Endothelial cell of umbilical vein (primary cell): ENCODE measurements at regions of chr20 and their contacts with region 1.

Region 1: DNA sequence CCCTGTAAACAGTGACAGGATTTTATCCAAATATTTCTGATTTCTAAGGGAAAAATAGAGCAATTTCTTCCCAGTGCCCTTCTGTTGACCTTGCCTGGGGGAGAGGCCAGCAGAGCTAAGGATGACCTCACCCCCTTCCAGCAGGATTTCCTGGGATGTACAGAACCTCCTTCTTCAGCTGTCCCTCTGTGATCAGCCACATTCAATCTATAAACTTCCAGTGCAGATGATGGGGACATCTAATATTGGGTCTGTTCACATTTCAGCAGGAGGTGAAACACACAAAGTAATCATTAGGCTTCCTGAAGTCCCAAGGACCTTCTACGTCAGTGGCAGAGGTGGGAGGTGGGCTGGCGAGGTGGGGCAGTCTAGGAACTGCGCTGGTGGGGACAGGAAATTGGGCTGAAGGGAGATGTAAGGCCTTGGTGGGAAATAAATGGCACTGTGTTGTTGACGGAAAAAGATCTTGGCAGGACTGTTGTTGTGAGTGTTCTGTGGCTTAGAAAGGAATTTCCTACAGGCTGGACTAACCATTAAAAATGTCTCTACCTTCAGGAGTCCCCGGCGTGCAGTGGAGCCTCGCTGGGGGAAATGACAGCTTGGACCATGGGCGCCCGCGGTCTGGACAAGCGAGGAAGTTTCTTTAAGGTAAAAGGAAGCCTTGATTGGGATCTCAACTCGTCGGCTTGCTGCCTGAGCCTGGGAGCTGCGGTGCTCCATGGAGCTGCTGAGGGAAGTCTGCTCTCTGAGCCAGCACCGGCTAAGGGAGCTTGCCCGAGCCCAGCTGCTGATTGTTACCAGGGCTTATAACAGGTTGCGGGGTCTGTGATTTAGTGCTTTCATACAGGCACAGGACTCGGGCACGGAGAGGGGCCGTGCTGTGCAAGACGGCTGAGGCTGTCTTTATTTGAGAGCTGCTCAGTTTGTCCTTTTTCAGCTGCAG is 127.9 kb upstream of the NAA20 start:
- DNase-seq: peak; percentile 97
- H3K4me3 ChIP-seq: peak overlapping the region; percentile 63 to 98 (median 85)
- H3K27ac ChIP-seq: peak overlapping the region; percentile 91
- H3K4me1 ChIP-seq: peaks cover 50% of the 10 kb centered on the region
- H3K27me3 ChIP-seq: no peaks in the 10 kb centered on the region
- CTCF ChIP-seq: no peak
- POLR2A ChIP-seq: peak; percentile 69

Region 2: DNA sequence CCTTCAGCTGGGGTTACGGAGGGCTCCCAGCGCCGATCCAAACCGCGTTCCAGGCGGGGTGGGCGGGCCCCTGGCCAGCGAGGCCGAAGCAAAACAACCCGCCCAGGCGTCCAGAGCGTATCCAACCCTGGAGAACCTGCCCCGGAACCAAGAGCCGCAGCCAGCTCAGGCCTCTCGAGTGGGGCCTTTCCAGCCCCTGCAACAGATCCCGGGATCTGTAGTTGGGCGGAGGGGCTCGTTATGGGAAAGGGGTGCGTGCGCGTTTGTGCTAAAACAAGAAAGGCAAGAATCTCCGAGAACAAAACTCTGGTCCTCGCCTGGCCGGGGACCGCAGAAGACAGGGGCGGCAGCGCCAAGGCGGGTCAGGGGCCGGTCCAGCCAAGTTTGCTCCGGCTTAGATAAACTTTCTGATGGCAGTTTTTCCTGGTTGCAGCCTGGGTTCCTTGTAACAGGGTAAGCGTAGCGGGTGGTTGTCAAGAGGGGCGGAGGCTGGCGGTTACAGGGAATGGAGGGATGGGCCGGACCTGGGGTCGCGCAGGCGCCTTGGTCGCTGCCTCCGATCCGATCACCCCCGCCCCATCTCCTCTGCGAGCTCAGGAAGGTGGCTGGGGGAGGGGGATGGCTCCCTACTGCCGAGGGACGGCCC is 131.7 kb before region 1 on chr20:
- CTCF ChIA-PET with region 1: interaction called, 3 read pairs
- POLR2A ChIA-PET with region 1: no interaction called
- dilution Hi-C with region 1: no loop called
- intact Hi-C with region 1: loop called (anchors 1 kb)
- DNase-seq: peak; percentile 92
- H3K4me3 ChIP-seq: peak overlapping the region; percentile 75 to 77 (median 76)
- H3K27ac ChIP-seq: peak overlapping the region; percentile 54
- H3K4me1 ChIP-seq: peaks cover 18% of the 10 kb centered on the region
- H3K27me3 ChIP-seq: no peaks in the 10 kb centered on the region
- CTCF ChIP-seq: no peak
- POLR2A ChIP-seq: peak; percentile 61

Region 3: DNA sequence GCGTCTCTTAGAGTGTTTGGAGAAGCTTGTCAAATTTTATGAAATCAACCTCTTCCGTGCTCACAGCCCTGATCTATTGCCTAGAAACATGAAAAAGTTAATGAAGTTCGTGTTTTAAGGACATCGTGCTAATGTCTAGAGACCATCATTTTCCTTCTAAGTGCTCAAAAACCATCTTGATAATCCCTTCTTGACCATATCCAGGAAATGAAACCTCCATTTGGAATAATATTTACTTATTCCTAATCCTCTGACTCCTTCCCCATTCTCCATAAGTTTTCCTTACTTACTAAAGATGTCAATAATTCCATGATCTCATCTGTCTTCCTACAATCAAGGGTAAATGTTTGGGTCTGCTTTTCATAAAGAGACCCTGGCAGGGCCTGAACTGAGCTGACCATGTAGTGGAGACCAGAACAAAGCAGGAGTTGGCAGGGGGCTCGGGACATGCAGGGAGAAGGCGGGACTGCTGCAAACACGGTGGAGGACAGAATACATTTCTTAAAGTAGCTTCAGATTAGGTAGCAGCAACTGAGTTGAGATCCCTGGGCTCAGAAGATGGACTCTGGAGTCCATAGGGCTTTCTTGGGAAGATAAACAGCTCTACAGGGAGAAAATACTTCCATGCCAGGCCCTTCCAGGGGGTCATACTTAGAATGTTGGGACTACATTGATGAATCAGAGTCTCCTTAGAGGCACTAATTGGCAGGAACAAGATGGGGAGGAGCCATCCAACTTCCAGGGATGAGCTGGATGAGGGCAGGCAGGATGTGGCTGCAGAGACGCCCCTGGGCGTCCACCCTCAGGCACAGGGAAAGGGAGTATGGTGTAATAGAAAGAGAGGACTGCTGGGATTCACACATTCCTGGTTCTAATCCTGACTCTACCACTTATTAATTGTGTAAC is 30.6 kb before region 1 on chr20:
- CTCF ChIA-PET with region 1: no interaction called
- POLR2A ChIA-PET with region 1: interaction called, 3 read pairs
- dilution Hi-C with region 1: no loop called
- intact Hi-C with region 1: loop called (anchors 2 kb)
- DNase-seq: no peak
- H3K4me3 ChIP-seq: no peak overlapping the region
- H3K27ac ChIP-seq: no peak overlapping the region
- H3K4me1 ChIP-seq: peaks cover 8% of the 10 kb centered on the region
- H3K27me3 ChIP-seq: no peaks in the 10 kb centered on the region
- CTCF ChIP-seq: no peak
- POLR2A ChIP-seq: no peak

Region 4: DNA sequence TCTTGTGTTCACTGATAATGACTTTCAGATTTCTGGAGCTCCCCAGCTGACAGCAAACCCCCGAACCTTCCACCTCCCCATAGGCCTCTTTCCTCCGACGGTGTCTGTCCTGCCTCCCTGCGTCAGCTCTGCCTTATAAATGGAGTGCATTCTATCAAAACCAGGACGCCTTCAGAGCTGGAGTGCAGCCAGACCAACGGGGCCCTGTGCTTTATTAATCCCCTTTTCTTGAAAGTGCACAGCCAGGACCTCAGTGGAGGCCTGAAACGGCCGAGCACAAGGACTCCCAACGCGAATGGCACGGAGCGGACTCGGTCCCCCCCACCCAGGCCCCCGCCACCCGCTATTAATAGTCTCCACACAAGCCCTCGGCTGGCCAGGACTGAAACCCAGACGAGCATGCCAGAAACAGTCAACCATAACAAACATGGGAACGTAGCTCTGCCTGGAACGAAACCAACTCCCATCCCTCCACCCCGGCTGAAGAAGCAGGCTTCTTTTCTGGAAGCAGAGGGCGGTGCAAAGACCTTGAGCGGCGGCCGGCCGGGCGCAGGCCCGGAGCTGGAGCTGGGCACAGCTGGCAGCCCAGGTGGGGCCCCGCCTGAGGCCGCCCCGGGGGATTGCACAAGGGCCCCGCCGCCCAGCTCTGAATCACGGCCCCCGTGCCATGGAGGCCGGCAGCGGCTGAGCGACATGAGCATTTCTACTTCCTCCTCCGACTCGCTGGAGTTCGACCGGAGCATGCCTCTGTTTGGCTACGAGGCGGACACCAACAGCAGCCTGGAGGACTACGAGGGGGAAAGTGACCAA is 85.5 kb after region 1 on chr20:
- CTCF ChIA-PET with region 1: interaction called, 3 read pairs
- POLR2A ChIA-PET with region 1: no interaction called
- dilution Hi-C with region 1: no loop called
- intact Hi-C with region 1: loop called (anchors 1 kb)
- DNase-seq: peak; percentile 85
- H3K4me3 ChIP-seq: peak overlapping the region in 1 of 3 experiments; percentile 2
- H3K27ac ChIP-seq: peak overlapping the region; percentile 72
- H3K4me1 ChIP-seq: peaks cover 46% of the 10 kb centered on the region
- H3K27me3 ChIP-seq: no peaks in the 10 kb centered on the region
- CTCF ChIP-seq: no peak
- POLR2A ChIP-seq: no peak